H1 (cell line): ENCODE measurements at regions of chr2 and their contacts with region 1.

Region 1: GRCh38 chr2:195672668-195673067 is 15.6 kb downstream of the SLC39A10 start:
- DNase-seq: no peak
- H3K4me3 ChIP-seq: no peak overlapping the region
- H3K27ac ChIP-seq: no peak overlapping the region
- H3K4me1 ChIP-seq: peaks cover 0 to 2% (median 0%) of the 10 kb centered on the region in 4 experiments; a peak in 1 of 7 replicates
- H3K27me3 ChIP-seq: no peaks in the 10 kb centered on the region
- CTCF ChIP-seq: peak in 1 of 3 experiments; percentile 60; a peak in 2 of 4 replicates
- EP300 ChIP-seq: no peak
- POLR2A ChIP-seq: no peak
- RAD21 ChIP-seq: peak in 1 of 2 experiments; percentile 27; a peak in 3 of 4 replicates

Region 2: DNA sequence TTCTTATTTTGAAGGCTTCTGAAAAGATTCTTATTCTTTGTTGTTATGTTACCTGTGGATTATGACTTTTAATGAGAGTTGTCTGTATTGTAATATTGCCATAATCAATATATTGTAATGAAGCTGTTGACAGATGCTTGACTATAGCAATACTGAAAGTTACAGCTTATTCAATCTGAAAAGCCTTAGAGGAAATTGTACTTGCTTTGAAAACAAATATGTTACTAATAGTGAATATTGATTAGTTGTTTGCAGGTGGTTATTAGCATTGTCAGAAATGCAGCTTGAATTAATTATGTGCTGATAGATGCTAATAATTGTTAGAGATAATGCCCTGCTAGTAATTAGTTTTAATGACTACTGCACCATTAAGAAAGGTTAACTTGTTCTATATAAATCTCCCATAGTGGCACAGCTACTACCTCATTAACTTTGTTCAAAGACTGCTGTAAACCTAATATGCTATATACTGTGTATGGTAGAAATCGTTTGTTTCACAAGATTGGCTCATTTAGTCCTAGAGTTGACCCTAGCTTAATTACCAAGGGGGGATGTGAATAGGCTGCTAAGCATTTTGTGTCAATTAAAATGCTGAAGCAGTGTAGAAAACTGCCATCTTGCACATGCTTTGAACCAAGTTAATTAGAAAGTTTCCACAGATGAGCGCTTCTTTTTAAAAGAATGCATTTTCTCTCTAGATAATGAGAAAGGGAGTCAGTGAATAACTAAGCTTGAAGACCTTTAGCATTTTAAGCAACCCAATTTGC is 14.8 kb after region 1 on chr2:
- CTCF ChIA-PET with region 1: interaction called, 26 read pairs
- POLR2A ChIA-PET with region 1: no interaction called
- DNase-seq: no peak
- H3K4me3 ChIP-seq: no peak overlapping the region
- H3K27ac ChIP-seq: no peak overlapping the region
- H3K4me1 ChIP-seq: peaks cover 0 to 7% (median under 1%) of the 10 kb centered on the region in 4 experiments; a peak in 1 of 7 replicates
- H3K27me3 ChIP-seq: peaks cover 0 to 1% (median 0%) of the 10 kb centered on the region in 4 experiments; a peak in 1 of 7 replicates
- CTCF ChIP-seq: no peak
- EP300 ChIP-seq: no peak
- POLR2A ChIP-seq: no peak
- RAD21 ChIP-seq: no peak

Region 3: DNA sequence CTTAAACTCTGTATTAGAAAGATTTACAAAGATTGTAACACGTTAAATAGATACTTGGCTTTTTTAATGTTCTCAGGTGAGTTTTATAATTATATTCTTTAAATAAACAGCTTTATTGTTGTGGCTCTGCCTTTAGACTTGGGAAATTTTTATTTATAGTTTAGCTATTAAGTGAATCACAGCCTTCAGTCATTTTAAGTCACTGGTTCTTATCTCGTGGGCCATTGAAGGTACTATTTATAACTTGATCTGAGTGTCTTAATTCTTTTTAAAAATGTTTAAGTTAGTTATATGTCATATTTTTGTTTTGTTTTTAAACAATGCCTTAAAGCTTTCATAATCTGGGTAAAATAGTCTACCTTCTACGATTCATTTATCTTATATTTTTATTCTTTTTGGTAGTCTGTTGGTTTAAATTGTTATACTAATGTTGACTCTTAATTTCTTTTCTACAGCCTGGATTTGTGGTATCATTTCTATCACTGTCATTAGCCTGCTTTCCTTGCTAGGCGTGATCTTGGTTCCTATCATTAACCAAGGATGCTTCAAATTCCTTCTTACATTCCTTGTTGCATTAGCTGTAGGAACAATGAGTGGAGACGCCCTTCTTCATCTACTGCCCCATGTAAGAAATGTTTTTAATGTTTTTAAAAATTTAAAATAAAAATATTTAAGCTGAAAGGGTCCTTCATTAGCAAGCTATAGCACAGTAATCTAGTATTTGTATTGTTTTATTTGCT is 33.7 kb after region 1 on chr2:
- CTCF ChIA-PET with region 1: interaction called, 10 read pairs
- POLR2A ChIA-PET with region 1: no interaction called
- DNase-seq: no peak
- H3K4me3 ChIP-seq: no peak overlapping the region
- H3K27ac ChIP-seq: no peak overlapping the region
- H3K4me1 ChIP-seq: peaks cover 0 to 4% (median 0%) of the 10 kb centered on the region in 4 experiments; a peak in 1 of 7 replicates
- H3K27me3 ChIP-seq: no peaks in the 10 kb centered on the region
- CTCF ChIP-seq: no peak
- EP300 ChIP-seq: no peak
- POLR2A ChIP-seq: no peak
- RAD21 ChIP-seq: no peak